ENCODE measurements at regions of chr4 and their contacts with region 1.

Region 1: GRCh38 chr4:25367004-25367621 is 9.9 kb upstream of the ANAPC4 start:
- DNase-seq: no peak
- ATAC-seq: peak; percentile 31; the same call in 1 of the 3 replicates
- H3K4me3 ChIP-seq: no peak overlapping the region
- H3K27ac ChIP-seq: no peak overlapping the region
- H3K4me1 ChIP-seq: no peaks in the 10 kb centered on the region
- H3K27me3 ChIP-seq: no peaks in the 10 kb centered on the region
- CTCF ChIP-seq: peak in 2 of 3 experiments; percentile 22 to 46; a peak in 4 of 6 replicates
- EP300 ChIP-seq: no peak
- POLR2A ChIP-seq: no peak
- RAD21 ChIP-seq: peak; percentile 80

Region 2: DNA sequence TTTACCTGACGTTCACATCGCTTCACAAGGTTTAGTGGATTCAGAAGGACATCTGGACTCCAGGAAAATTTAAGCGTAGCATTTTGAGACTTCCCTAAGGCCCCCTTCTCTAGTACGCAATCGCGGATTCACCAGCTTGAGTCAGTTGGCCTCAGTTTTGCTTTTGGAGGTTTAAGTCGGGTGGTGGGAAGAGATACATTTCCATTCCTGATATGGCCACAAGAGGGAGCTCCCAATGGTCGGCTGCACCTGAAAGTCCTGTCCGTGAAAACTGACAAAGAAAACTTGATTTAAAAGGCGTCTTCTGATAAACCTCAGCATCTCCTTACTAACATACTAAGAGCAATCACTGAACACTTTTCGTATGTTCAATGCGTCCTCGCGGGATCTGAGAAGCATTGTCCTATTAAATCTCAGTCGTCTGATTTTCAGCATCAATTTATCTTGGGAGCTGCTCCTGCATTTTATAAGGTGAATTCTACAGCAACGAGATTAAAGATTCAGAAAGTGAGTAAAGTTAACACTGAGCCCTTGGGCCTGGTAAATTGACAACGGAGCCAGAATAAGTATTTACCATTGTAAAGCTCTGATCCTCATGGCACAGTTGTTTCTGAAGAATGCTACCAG is 386.9 kb before region 1 on chr4:
- CTCF ChIA-PET with region 1: interaction called, 100 read pairs
- POLR2A ChIA-PET with region 1: no interaction called
- RAD21 ChIA-PET with region 1: interaction called, 18 read pairs
- SMC1A ChIA-PET with region 1: interaction called, 38 read pairs
- in situ Hi-C with region 1: loop called (anchors 5 kb)
- intact Hi-C with region 1: loop called (anchors 2 kb)
- DNase-seq: peak; percentile 19
- ATAC-seq: peak; percentile 85
- H3K4me3 ChIP-seq: no peak overlapping the region
- H3K27ac ChIP-seq: no peak overlapping the region
- H3K4me1 ChIP-seq: no peaks in the 10 kb centered on the region
- H3K27me3 ChIP-seq: no peaks in the 10 kb centered on the region
- CTCF ChIP-seq: peak; percentile 76 to 82 (median 78)
- EP300 ChIP-seq: no peak
- POLR2A ChIP-seq: no peak
- RAD21 ChIP-seq: peak; percentile 63

Region 3: GRCh38 chr4:25154594-25155265 is 212.4 kb before region 1 on chr4:
- CTCF ChIA-PET with region 1: interaction called, 10 read pairs
- POLR2A ChIA-PET with region 1: no interaction called
- RAD21 ChIA-PET with region 1: interaction called, 4 read pairs
- SMC1A ChIA-PET with region 1: no interaction called
- in situ Hi-C with region 1: no loop called
- intact Hi-C with region 1: no loop called
- DNase-seq: no peak
- ATAC-seq: 0 out of 3 replicates have a peak, but pooled peaks have one; percentile 12
- H3K4me3 ChIP-seq: no peak overlapping the region
- H3K27ac ChIP-seq: no peak overlapping the region
- H3K4me1 ChIP-seq: no peaks in the 10 kb centered on the region
- H3K27me3 ChIP-seq: no peaks in the 10 kb centered on the region
- CTCF ChIP-seq: no peak
- EP300 ChIP-seq: no peak
- POLR2A ChIP-seq: no peak
- RAD21 ChIP-seq: no peak

Region 4: GRCh38 chr4:25180524-25181131 is 186.5 kb before region 1 on chr4:
- CTCF ChIA-PET with region 1: interaction called, 92 read pairs
- POLR2A ChIA-PET with region 1: no interaction called
- RAD21 ChIA-PET with region 1: interaction called, 20 read pairs
- SMC1A ChIA-PET with region 1: interaction called, 29 read pairs
- in situ Hi-C with region 1: loop called (anchors 25 kb)
- intact Hi-C with region 1: loop called (anchors 1 kb)
- DNase-seq: no peak
- ATAC-seq: peak; percentile 99
- H3K4me3 ChIP-seq: no peak overlapping the region
- H3K27ac ChIP-seq: no peak overlapping the region
- H3K4me1 ChIP-seq: no peaks in the 10 kb centered on the region
- H3K27me3 ChIP-seq: no peaks in the 10 kb centered on the region
- CTCF ChIP-seq: peak; percentile 61 to 75 (median 65)
- EP300 ChIP-seq: no peak
- POLR2A ChIP-seq: no peak
- RAD21 ChIP-seq: peak; percentile 69

Region 5: GRCh38 chr4:25312496-25313200 is 54.5 kb before region 1 on chr4 and contains the start of gene ZCCHC4:
- CTCF ChIA-PET with region 1: interaction called, 35 read pairs
- POLR2A ChIA-PET with region 1: no interaction called
- RAD21 ChIA-PET with region 1: interaction called, 18 read pairs
- SMC1A ChIA-PET with region 1: interaction called, 3 read pairs
- in situ Hi-C with region 1: no loop called
- intact Hi-C with region 1: no loop called
- DNase-seq: peak; percentile 67
- ATAC-seq: peak; percentile 95
- H3K4me3 ChIP-seq: peak within 1 kb of the TSS; percentile 98
- H3K27ac ChIP-seq: peak within 1 kb of the TSS; percentile 72
- H3K4me1 ChIP-seq: peaks cover 24% of the 10 kb centered on the region
- H3K27me3 ChIP-seq: no peaks in the 10 kb centered on the region
- CTCF ChIP-seq: peak; percentile 99 to 100 (median 100); a peak in 5 of 6 replicates
- EP300 ChIP-seq: no peak
- POLR2A ChIP-seq: peak; percentile 94
- RAD21 ChIP-seq: peak; percentile 35; the same call in 1 of the 2 replicates
- polyA plus RNA-seq, gene ZCCHC4: 3.2 to 4.5 TPM

Region 6: DNA sequence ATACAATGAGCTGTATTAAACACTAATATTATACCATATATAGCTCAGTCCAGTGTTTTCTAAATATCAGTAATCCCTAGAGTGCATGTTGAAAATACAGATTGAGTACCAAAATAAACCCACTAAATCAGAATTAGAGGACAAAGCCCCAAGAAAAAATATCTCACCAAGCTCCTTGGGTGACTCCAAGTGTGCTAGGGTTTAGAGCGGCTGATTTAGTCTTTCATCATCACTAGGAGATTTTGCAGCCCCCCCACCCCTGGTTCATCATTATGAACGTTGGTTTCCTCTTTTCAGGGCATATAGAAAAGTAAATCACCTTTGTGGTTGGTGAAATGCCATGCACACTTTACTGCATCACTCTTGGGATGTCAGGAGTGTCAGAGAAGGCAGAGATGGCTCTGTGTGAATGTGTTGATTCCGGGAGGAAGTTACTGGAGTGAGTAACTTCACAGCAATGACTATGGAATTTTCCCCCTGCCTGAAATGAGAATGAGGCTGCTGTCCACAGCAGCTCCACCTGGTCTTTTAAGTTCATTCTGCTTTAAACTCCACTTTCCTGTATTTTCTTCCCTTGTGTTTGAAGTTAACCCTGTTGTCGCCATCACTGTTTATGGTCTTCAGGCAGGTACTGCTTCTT is 15.2 kb before region 1 on chr4:
- CTCF ChIA-PET with region 1: interaction called, 56 read pairs
- POLR2A ChIA-PET with region 1: interaction called, 3 read pairs
- RAD21 ChIA-PET with region 1: interaction called, 16 read pairs
- SMC1A ChIA-PET with region 1: interaction called, 21 read pairs
- in situ Hi-C with region 1: no loop called
- intact Hi-C with region 1: no loop called
- DNase-seq: no peak
- ATAC-seq: no peak
- H3K4me3 ChIP-seq: no peak overlapping the region
- H3K27ac ChIP-seq: no peak overlapping the region
- H3K4me1 ChIP-seq: no peaks in the 10 kb centered on the region
- H3K27me3 ChIP-seq: no peaks in the 10 kb centered on the region
- CTCF ChIP-seq: no peak
- EP300 ChIP-seq: no peak
- POLR2A ChIP-seq: no peak
- RAD21 ChIP-seq: no peak

Region 7: DNA sequence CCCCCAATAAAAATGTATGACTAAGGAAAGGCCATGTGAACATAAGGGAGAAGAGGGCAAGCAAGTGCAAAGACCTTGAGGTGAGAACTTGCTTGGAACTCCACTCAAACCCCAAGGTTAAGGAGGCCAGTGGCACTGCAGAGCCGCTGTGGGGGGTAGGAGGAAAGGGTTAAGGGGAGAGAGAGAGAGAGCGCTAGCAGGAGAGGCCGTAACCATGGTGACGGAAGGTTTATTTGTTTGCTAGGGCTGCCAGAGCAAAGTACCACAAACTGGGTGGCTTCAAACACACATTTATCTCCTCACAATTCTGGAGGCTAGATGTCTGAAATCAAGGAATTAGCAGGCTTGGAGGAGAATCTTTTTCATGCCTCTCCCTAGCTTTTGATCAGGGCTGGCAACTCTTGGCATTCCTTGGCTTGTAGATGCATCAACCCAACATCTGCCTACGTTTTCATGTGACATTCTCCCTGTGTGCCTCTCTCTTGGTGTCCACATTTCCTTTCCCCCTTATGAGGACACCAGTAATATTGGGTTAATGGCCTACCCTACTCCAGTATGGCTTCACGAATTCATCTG is 582.1 kb after region 1 on chr4:
- CTCF ChIA-PET with region 1: no interaction called
- POLR2A ChIA-PET with region 1: no interaction called
- RAD21 ChIA-PET with region 1: no interaction called
- SMC1A ChIA-PET with region 1: no interaction called
- in situ Hi-C with region 1: no loop called
- intact Hi-C with region 1: no loop called
- DNase-seq: no peak
- ATAC-seq: no peak
- H3K4me3 ChIP-seq: no peak overlapping the region
- H3K27ac ChIP-seq: no peak overlapping the region
- H3K4me1 ChIP-seq: no peaks in the 10 kb centered on the region
- H3K27me3 ChIP-seq: peaks cover 0 to 6% of the 10 kb centered on the region in 2 experiments; a peak in 1 of 4 replicates
- CTCF ChIP-seq: no peak
- EP300 ChIP-seq: no peak
- POLR2A ChIP-seq: no peak
- RAD21 ChIP-seq: no peak

Measured in GM12878 (cell line).